ENCODE measurements at regions of chr10 and their contacts with region 1.

Region 1: GRCh38 chr10:127715782-127716378 is 21.1 kb upstream of the FOXI2 start:
- DNase-seq: no peak
- H3K4me3 ChIP-seq: no peak overlapping the region
- H3K27ac ChIP-seq: no peak overlapping the region
- H3K4me1 ChIP-seq: no peaks in the 10 kb centered on the region
- H3K27me3 ChIP-seq: no peaks in the 10 kb centered on the region
- CTCF ChIP-seq: peak; percentile 22 to 45

Region 2: GRCh38 chr10:127813290-127813689 is 97.4 kb after region 1 on chr10:
- CTCF ChIA-PET with region 1: no interaction called
- dilution Hi-C with region 1: no loop called
- in situ Hi-C with region 1: no loop called
- intact Hi-C with region 1: loop called (anchors 1 kb)
- DNase-seq: no peak
- H3K4me3 ChIP-seq: no peak overlapping the region
- H3K27ac ChIP-seq: no peak overlapping the region
- H3K4me1 ChIP-seq: no peaks in the 10 kb centered on the region
- H3K27me3 ChIP-seq: no peaks in the 10 kb centered on the region
- CTCF ChIP-seq: peak; percentile 19 to 47

Measured in mammary epithelial cell (primary cell).